Testis (tissue), 5 donors: ENCODE measurements at regions of chr18 and their contacts with region 1.

Region 1: DNA sequence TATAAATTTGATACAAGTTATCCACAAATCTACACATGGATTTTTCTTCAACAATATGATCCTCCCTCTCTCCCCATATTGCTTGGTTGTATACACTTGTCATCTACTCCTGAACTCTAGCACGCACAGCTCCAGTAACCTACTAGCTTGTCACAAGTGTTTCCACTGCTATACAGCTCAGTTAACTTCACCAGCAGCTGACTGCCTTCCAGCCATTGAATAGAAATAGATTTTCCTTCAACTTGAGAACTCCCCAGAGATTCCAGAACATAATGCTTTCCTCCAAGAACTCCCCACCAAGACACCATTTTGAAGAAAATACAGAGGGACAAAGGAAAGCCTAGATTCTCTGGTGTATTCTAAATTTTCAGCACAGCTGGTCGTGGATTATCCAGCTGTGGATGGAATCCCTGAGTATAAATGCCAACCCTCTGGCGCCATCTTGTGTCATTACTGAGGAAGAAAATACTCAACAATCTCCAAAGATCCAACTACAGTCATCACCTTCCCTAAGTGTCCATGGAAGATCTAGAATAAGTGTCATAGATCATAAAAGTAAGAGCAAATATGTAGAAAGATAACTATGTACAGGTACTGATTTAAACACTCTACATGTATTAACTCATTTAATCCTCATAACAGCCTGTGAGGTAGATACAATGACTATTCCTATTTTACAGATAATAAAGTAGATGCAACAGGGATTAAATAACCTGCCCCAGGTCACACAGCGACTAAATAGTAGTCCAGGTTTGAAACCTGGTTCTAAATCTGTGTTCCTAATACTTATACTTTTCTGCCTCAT is 156.7 kb downstream of the ARHGAP28 start:
- DNase-seq: peak; percentile 67
- H3K4me3 ChIP-seq: no peak overlapping the region
- H3K27ac ChIP-seq: peak overlapping the region in 1 of 2 donors; percentile 84
- H3K4me1 ChIP-seq: peaks cover 13% of the 10 kb centered on the region
- H3K27me3 ChIP-seq: no peaks in the 10 kb centered on the region
- CTCF ChIP-seq: peak; percentile 43 to 84 (median 56)
- POLR2A ChIP-seq: no peak

Region 2: DNA sequence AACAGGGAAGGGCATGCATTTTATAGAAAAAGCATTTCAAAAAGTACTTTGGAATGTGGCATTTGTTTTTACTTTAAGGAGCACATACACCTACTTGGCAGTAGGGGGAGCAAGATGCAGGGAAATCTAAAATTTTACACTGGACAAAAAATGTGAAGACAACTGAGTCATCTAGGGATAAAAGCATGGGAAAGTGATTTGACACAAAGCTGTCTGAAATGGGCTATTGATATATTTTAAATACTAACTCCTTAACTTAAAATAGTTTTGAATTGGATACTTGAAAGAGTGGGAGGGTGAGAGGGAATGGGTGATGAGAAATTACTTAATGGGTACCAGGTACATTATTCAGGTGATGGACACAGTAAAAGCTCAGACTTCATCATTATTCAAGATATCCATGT is 1006.7 kb before region 1 on chr18:
- intact Hi-C with region 1: loop called (anchors 5 kb)
- DNase-seq: no peak
- H3K4me3 ChIP-seq: no peak overlapping the region
- H3K27ac ChIP-seq: no peak overlapping the region
- H3K4me1 ChIP-seq: no peaks in the 10 kb centered on the region
- H3K27me3 ChIP-seq: no peaks in the 10 kb centered on the region
- CTCF ChIP-seq: peak; percentile 71 to 74 (median 71)
- POLR2A ChIP-seq: no peak

Region 3: DNA sequence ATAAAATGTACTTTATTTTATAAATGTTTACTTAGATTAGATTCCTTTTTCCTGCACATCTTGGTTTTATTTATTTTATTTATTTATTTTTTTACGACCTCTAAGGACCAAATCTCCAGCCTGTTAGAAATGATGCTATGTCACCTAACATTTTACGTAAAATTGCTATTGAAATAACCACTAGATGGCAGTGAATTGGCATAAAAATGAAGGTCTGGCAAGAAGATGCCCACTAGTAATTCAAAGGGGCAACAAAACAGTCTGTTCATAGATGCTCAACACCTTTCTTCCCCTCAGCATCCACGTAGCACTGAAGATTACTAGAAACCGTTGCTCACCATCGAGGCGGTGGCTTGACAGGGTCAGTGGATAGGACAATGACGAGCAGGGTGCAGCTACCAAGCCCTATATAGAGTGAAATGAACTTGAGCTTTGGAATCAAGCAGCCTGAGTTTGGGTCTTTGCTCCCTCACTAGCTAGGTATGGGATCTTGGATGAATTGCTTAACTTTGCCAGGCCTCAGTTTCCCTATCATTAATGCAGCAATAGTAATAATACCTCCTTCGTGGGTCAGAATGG is 342.8 kb before region 1 on chr18:
- intact Hi-C with region 1: loop called (anchors 10 kb)
- DNase-seq: no peak
- H3K4me3 ChIP-seq: no peak overlapping the region
- H3K27ac ChIP-seq: no peak overlapping the region
- H3K4me1 ChIP-seq: peaks cover 13% of the 10 kb centered on the region
- H3K27me3 ChIP-seq: no peaks in the 10 kb centered on the region
- CTCF ChIP-seq: peak; percentile 26 to 64 (median 58)
- POLR2A ChIP-seq: no peak

Region 4: DNA sequence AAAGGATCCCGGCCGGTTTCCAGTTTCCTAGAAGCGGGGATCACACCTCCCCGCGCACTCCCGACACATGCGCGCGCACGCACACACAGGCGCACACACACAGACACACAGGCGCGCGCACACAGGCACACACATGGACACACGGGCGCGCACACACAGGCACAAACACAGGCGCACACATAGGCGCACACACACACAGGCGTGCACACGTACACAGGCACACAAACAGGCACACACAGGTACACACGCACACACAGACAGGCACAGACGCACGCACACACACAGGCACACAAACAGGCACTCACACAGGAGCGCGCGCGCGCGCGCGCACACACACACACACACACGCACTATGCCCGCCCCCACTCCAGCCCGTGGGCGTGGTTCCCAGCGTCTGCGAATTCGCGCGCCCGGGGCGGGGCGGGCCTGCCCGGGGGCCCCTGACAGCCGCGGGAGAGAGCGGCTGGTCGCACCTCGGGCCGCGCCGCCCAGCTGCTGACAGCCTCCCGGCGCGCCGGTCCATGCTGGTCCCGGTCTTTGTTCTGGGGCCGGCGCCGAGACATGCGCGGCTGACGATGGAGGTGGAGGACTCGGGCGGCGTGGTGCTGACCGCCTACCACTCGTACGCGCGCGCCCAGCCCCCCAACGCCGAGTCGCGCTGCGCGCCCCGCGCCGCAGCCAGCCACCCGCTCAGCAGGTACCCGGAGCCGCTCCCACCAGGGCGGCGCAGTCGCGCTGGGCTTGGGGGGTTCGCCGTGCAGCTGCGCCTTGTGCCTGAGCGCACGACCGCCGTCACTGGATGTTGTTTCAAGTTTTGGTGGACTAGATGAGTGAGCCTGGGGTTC is 156.7 kb before region 1 on chr18 and contains the start of gene ARHGAP28:
- intact Hi-C with region 1: loop called (anchors 10 kb)
- DNase-seq: peak; percentile 86
- H3K4me3 ChIP-seq: peak within 1 kb of the TSS; percentile 74
- H3K27ac ChIP-seq: peak within 1 kb of the TSS; percentile 79 to 87
- H3K4me1 ChIP-seq: peaks cover 16% of the 10 kb centered on the region
- H3K27me3 ChIP-seq: no peaks in the 10 kb centered on the region
- CTCF ChIP-seq: peak; percentile 29 to 31 (median 31)
- POLR2A ChIP-seq: no peak
- total RNA-seq, gene ARHGAP28: 45.5 to 76.8 TPM

Region 5: GRCh38 chr18:7303316-7304060 is 417.3 kb after region 1 on chr18:
- intact Hi-C with region 1: no loop called
- DNase-seq: no peak
- H3K4me3 ChIP-seq: no peak overlapping the region
- H3K27ac ChIP-seq: no peak overlapping the region
- H3K4me1 ChIP-seq: no peaks in the 10 kb centered on the region
- H3K27me3 ChIP-seq: no peaks in the 10 kb centered on the region
- CTCF ChIP-seq: no peak
- POLR2A ChIP-seq: no peak